ENCODE measurements at regions of chr9 and their contacts with region 1.

Region 1: GRCh38 chr9:73151653-73152542 is at the start of gene ANXA1:
- DNase-seq: peak; percentile 93
- H3K4me3 ChIP-seq: peak within 1 kb of the TSS; percentile 62 to 99 (median 97)
- H3K27ac ChIP-seq: peak within 1 kb of the TSS; percentile 99
- H3K4me1 ChIP-seq: peaks cover 39% of the 10 kb centered on the region
- H3K27me3 ChIP-seq: no peaks in the 10 kb centered on the region
- CTCF ChIP-seq: no peak
- total RNA-seq, gene ANXA1: 461 to 672 TPM

Region 2: GRCh38 chr9:73104342-73104741 is 47.6 kb before region 1 on chr9:
- CTCF ChIA-PET with region 1: no interaction called
- dilution Hi-C with region 1: no loop called
- in situ Hi-C with region 1: no loop called
- intact Hi-C with region 1: loop called (anchors 1 kb)
- DNase-seq: no peak
- H3K4me3 ChIP-seq: no peak overlapping the region
- H3K27ac ChIP-seq: no peak overlapping the region
- H3K4me1 ChIP-seq: peaks cover 5% of the 10 kb centered on the region
- H3K27me3 ChIP-seq: no peaks in the 10 kb centered on the region
- CTCF ChIP-seq: no peak

Region 3: GRCh38 chr9:73116031-73116430 is 35.9 kb before region 1 on chr9:
- CTCF ChIA-PET with region 1: no interaction called
- dilution Hi-C with region 1: no loop called
- in situ Hi-C with region 1: no loop called
- intact Hi-C with region 1: loop called (anchors 1 kb)
- DNase-seq: peak; percentile 90
- H3K4me3 ChIP-seq: no peak overlapping the region
- H3K27ac ChIP-seq: peak overlapping the region; percentile 69
- H3K4me1 ChIP-seq: peaks cover 17% of the 10 kb centered on the region
- H3K27me3 ChIP-seq: no peaks in the 10 kb centered on the region
- CTCF ChIP-seq: no peak

Region 4: GRCh38 chr9:73132034-73132776 is 19.7 kb before region 1 on chr9:
- CTCF ChIA-PET with region 1: no interaction called
- dilution Hi-C with region 1: no loop called
- in situ Hi-C with region 1: no loop called
- intact Hi-C with region 1: loop called (anchors 1 kb)
- DNase-seq: peak; percentile 97
- H3K4me3 ChIP-seq: peak overlapping the region; percentile 33 to 62 (median 51)
- H3K27ac ChIP-seq: peak overlapping the region; percentile 99
- H3K4me1 ChIP-seq: peaks cover 34% of the 10 kb centered on the region
- H3K27me3 ChIP-seq: no peaks in the 10 kb centered on the region
- CTCF ChIP-seq: no peak

Region 5: DNA sequence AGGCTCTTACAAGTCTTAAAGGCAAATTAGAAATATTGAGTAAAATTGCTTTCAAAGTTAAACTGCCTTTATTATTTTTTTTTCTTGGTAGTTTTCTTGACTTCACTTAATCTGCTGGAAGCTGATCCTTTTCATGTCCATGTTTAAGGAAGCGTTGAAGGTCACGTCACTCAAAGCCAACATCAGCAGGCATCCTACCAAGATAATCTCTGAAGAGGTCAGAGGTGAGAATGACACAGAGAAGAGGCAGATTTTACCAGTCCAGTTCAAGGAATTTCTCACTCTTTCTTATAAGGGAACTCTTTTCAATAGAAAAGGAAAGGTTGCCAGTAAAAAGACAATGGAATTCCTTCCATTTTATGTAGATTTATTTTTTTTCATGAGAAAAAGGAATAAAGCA is 259.6 kb after region 1 on chr9:
- CTCF ChIA-PET with region 1: no interaction called
- dilution Hi-C with region 1: no loop called
- in situ Hi-C with region 1: no loop called
- intact Hi-C with region 1: no loop called
- DNase-seq: no peak
- H3K4me3 ChIP-seq: no peak overlapping the region
- H3K27ac ChIP-seq: no peak overlapping the region
- H3K4me1 ChIP-seq: no peaks in the 10 kb centered on the region
- H3K27me3 ChIP-seq: no peaks in the 10 kb centered on the region
- CTCF ChIP-seq: no peak

Measured in mammary epithelial cell (primary cell).